AG04450 (cell line): ENCODE measurements at regions of chr4 and their contacts with region 1.

Region 1: DNA sequence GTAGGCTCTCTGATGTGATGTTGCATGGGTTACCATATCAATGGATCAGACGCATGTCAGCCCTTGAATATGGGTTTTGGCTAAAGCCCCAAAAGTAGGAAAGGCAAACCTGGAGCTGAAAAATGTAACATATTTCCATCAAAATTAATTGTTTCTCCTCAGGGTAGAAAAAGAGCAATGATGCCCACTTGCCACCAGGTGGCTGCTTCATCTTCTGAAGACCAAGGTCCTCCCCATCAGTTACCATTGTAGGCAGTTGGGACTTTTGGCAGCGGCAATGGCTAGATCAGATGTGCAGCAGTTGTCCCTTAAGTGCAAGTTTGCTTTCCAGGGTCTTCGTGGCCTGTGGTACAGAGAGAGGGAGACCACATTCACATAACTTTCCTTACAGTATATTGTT is 118.2 kb downstream of the NAF1 start:
- DNase-seq: no peak
- H3K4me3 ChIP-seq: no peak overlapping the region
- H3K27ac ChIP-seq: no peak overlapping the region
- H3K27me3 ChIP-seq: no peaks in the 10 kb centered on the region
- CTCF ChIP-seq: peak; percentile 46

Region 2: GRCh38 chr4:162347842-162348213 is 700.6 kb before region 1 on chr4:
- CTCF ChIA-PET with region 1: no interaction called
- POLR2A ChIA-PET with region 1: no interaction called
- DNase-seq: no peak
- H3K4me3 ChIP-seq: no peak overlapping the region
- H3K27ac ChIP-seq: no peak overlapping the region
- H3K27me3 ChIP-seq: no peaks in the 10 kb centered on the region
- CTCF ChIP-seq: no peak

Region 3: GRCh38 chr4:163191999-163192398 is 143.6 kb after region 1 on chr4:
- CTCF ChIA-PET with region 1: interaction called, 11 read pairs
- POLR2A ChIA-PET with region 1: no interaction called
- DNase-seq: no peak
- H3K4me3 ChIP-seq: no peak overlapping the region
- H3K27ac ChIP-seq: no peak overlapping the region
- H3K27me3 ChIP-seq: no peaks in the 10 kb centered on the region
- CTCF ChIP-seq: peak; percentile 46

Region 4: GRCh38 chr4:163332500-163333406 is 284.3 kb after region 1 on chr4 and contains the start of gene NPY1R:
- CTCF ChIA-PET with region 1: interaction called, 10 read pairs
- POLR2A ChIA-PET with region 1: no interaction called
- DNase-seq: peak; percentile 36
- H3K4me3 ChIP-seq: peak within 1 kb of the TSS; percentile 65
- H3K27ac ChIP-seq: no peak within 1 kb of the TSS
- H3K27me3 ChIP-seq: peaks cover 22% of the 10 kb centered on the region
- CTCF ChIP-seq: peak; percentile 79
- polyA plus RNA-seq, gene NPY1R: not detected in 2 replicates